Activated CD8-positive, alpha-beta memory T cell treated with anti-CD3 and anti-CD28 coated beads, Interleukin-2, amount 10 ng/mL, durations not matched to agents 7 days and 5 days (primary cell): ENCODE measurements at regions of chr1 and their contacts with region 1.

Region 1: DNA sequence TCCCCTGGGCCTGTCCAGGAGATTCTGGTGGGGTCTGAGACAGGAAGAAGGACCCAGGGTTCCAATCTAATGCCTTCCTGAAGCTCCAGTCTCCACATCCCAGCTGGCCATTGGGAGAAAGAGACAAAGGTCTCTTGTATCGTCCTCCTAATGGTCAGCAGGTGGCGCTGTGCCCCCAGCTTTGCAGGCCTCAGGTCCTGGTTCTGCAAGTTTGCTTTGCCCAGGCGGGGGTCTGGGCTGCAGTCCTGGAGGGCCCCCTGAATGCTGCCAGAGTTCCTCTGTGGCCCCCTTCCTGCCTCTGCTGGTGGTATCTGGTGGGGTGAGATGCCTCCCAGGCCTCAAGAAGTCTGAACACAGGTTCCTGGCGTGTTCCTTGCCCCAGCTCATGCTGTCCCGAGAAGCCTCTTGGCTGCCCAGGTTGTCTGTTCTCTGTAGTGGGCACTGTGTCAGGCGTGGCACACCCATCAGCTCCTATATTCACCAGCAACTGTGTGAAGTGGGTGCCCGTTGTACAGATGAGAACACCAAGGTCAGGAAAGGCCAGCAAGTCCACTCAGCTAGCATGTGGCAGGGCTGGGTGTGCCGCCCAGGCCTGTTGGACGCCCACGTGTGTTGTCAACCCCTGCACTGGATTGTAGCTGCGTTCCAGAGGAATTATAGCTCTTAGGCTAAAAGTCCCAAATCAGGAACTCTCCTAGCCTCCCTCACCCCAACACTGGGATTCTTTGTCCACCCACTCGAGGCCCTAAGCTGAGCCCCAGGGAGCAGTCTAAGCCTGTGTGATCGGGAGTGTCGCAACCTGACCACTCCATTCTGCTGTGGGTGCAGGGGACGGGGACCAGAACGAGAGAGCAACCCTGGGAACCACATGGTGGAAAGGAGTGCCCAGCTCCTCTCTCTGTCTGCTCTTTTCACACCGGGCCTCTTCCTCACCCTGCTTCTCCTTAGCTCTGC is 33.9 kb upstream of the CSF3R start:
- DNase-seq: peak; percentile 58
- ATAC-seq: peak; percentile 74
- H3K4me3 Mint-ChIP-seq: no peak overlapping the region
- H3K27ac Mint-ChIP-seq: no peak overlapping the region
- H3K4me1 Mint-ChIP-seq: peaks cover 15% of the 10 kb centered on the region
- H3K27me3 Mint-ChIP-seq: no peaks in the 10 kb centered on the region

Region 2: DNA sequence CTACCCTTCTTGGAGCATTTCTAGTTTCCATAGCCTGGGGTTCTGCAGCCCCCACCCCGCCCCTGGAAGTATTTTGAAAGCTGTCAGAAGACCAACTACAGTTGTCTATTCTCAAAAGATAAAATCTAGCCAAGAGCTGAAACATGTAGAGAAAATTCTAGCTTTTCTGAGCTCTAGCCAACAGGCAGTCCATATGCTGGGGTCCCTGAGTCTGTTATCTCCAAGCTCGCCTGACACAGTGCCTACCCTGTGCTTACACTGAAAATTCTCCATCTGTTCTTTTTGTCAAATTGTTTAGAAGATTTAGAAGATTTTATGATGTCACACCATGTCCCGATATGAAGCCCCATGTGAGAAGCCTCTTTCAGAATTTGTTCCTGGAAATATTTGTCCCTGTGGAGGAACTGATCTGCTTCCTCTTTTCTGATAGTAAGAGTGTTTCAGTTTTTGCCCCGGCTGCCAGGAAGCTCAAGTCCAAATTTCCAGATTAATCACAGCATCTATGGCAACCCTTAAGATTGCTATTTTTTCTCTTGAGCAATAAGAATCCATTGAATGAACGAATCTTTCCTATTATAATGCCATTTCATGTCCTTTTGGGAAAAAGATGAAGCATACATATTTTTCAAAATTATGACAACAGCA is 10.3 kb before region 1 on chr1:
- CTCF ChIA-PET with region 1: interaction called, 15 read pairs
- DNase-seq: no peak
- ATAC-seq: no peak
- H3K4me3 Mint-ChIP-seq: no peak overlapping the region
- H3K27ac Mint-ChIP-seq: no peak overlapping the region
- H3K4me1 Mint-ChIP-seq: no peaks in the 10 kb centered on the region
- H3K27me3 Mint-ChIP-seq: peaks cover 46% of the 10 kb centered on the region

Region 3: GRCh38 chr1:36534711-36535412 is 18.2 kb after region 1 on chr1:
- CTCF ChIA-PET with region 1: interaction called, 13 read pairs
- DNase-seq: peak; percentile 32
- ATAC-seq: no peak
- H3K4me3 Mint-ChIP-seq: no peak overlapping the region
- H3K27ac Mint-ChIP-seq: no peak overlapping the region
- H3K4me1 Mint-ChIP-seq: no peaks in the 10 kb centered on the region
- H3K27me3 Mint-ChIP-seq: peaks cover 46% of the 10 kb centered on the region

Region 4: DNA sequence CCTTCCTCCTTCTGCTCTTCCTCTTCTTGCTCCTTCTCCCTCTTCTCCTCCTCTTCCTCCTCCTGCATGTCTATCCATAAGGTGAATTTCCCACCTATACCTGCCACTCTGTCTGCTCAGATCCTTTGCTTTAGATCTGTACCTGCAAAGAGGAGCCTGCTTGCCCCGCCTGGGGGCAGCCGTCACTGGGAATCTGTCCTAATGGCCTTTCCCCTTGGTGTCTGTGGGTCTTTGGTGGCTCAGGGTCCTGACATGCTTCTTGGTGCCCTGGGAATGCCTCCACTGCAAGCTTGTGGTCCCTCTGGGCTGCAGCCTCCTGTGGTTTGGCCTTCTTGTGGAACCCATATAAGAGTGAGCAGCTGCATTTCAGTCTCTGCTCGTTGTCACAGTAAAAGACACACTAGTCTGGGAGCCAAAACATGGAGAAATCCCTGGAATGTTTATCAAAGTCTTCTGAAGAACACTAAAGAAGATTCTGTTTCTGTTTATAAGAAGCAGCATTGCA is 45.6 kb after region 1 on chr1:
- CTCF ChIA-PET with region 1: interaction called, 12 read pairs
- DNase-seq: no peak
- ATAC-seq: no peak
- H3K4me3 Mint-ChIP-seq: no peak overlapping the region
- H3K27ac Mint-ChIP-seq: no peak overlapping the region
- H3K4me1 Mint-ChIP-seq: no peaks in the 10 kb centered on the region
- H3K27me3 Mint-ChIP-seq: peaks cover 6% of the 10 kb centered on the region

Region 5: GRCh38 chr1:36752891-36753361 is 236.3 kb after region 1 on chr1:
- CTCF ChIA-PET with region 1: no interaction called
- DNase-seq: no peak
- ATAC-seq: no peak
- H3K4me3 Mint-ChIP-seq: no peak overlapping the region
- H3K27ac Mint-ChIP-seq: no peak overlapping the region
- H3K4me1 Mint-ChIP-seq: peaks cover 2% of the 10 kb centered on the region
- H3K27me3 Mint-ChIP-seq: peaks cover 6% of the 10 kb centered on the region

Region 6: GRCh38 chr1:37434292-37434907 is 917.8 kb after region 1 on chr1:
- CTCF ChIA-PET with region 1: interaction called, 15 read pairs
- DNase-seq: peak; percentile 78
- ATAC-seq: peak; percentile 90
- H3K4me3 Mint-ChIP-seq: no peak overlapping the region
- H3K27ac Mint-ChIP-seq: no peak overlapping the region
- H3K4me1 Mint-ChIP-seq: no peaks in the 10 kb centered on the region
- H3K27me3 Mint-ChIP-seq: peaks cover 7% of the 10 kb centered on the region